ENCODE measurements at regions of chr2 and their contacts with region 1.

Region 1: GRCh38 chr2:233152541-233152940 is 92.4 kb downstream of the INPP5D start:
- DNase-seq: no peak
- CTCF ChIP-seq: no peak

Region 2: GRCh38 chr2:233142355-233142897 is 10.1 kb before region 1 on chr2:
- CTCF ChIA-PET with region 1: no interaction called
- POLR2A ChIA-PET with region 1: no interaction called
- DNase-seq: peak; percentile 74
- CTCF ChIP-seq: no peak

Region 3: GRCh38 chr2:233163486-233164103 is 11.1 kb after region 1 on chr2:
- CTCF ChIA-PET with region 1: interaction called, 10 read pairs
- POLR2A ChIA-PET with region 1: no interaction called
- DNase-seq: no peak
- CTCF ChIP-seq: no peak

Region 4: GRCh38 chr2:233280114-233280693 is 127.7 kb after region 1 on chr2:
- CTCF ChIA-PET with region 1: no interaction called
- POLR2A ChIA-PET with region 1: no interaction called
- DNase-seq: no peak
- CTCF ChIP-seq: no peak